Ascending aorta (tissue), 2 donors: ENCODE measurements at regions of chr19 and their contacts with region 1.

Region 1: GRCh38 chr19:45506246-45506990 is 861 bp upstream of the VASP start:
- DNase-seq: peak; percentile 73 to 94
- H3K4me3 ChIP-seq: peak overlapping the region; percentile 97 to 99
- H3K27ac ChIP-seq: peak overlapping the region; percentile 90 to 96
- H3K4me1 ChIP-seq: peaks cover 2 to 9% of the 10 kb centered on the region in 2 donors
- H3K27me3 ChIP-seq: no peaks in the 10 kb centered on the region
- CTCF ChIP-seq: peak in 2 of 3 experiments; percentile 29 to 46

Region 2: DNA sequence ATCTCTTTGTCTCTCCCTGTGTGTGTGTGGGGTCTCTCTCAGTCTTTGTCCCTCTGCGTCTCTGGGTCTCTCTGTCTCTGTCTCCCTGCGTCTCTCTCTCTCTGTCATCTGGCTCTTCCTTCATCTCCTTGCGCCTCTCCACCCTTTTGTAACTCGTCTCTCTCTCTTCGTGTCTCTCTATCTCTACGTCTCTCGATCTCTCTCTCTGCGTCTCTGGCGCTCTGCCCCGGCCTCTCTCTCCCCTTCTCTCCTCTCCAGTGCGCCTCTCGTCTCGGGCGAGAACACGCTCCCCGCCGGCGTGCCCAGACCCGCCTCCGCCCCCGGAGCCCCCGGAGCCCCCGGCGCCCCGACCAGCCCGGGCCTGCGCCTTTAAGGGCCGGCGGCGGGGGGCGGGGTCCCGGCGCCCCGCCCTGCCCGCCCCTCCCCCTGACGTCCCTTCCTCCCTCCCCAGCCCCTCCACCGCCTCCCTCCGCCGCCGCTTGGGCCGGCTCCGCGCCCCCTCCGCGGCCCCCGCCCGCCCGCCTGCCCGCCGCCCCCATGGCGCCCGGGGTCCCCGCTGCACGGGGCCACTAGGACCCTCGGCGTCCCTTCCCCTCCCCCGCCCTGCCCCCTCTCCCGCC is 255.5 kb before region 1 on chr19 and contains the start of gene MARK4:
- intact Hi-C with region 1: loop called (anchors 10 kb)
- DNase-seq: peak in 1 of 2 donors; percentile 68
- H3K4me3 ChIP-seq: peak within 1 kb of the TSS; percentile 83 to 99
- H3K27ac ChIP-seq: peak within 1 kb of the TSS; percentile 58 to 65
- H3K4me1 ChIP-seq: peaks cover 2 to 26% of the 10 kb centered on the region in 2 donors
- H3K27me3 ChIP-seq: no peaks in the 10 kb centered on the region
- CTCF ChIP-seq: no peak
- total RNA-seq, gene MARK4: 22.8 TPM

Region 3: DNA sequence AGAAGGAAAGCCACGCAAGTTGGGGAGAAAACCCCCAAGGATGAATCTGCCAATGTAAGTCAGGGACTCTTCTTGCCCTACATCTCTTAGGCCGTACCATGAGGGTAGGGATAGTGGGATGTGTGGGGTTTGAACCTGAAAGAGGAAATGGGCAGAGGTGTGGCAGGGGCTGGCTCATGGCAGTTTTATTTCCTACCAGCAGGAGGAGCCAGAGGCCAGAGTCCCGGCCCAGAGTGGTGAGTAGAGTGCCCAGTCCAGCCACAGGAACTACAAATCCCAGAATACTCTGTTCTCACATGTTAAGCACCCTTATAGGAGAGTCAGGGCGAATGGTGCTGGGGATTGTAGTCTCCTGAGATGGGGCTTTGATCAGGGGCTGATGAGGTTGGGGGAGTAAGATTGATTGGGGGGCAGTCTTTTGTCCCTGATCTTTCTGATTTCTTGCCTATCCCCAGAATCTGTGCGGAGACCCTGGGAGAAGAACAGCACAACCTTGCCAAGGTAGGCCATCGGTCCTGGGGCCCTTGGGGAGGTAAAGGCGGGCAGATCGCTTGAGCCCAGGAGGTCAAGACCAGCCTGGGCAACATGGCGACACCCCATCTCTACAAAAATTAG is 17.3 kb after region 1 on chr19:
- intact Hi-C with region 1: loop called (anchors 2 kb)
- DNase-seq: peak; percentile 47 to 89
- H3K4me3 ChIP-seq: no peak overlapping the region
- H3K27ac ChIP-seq: peak overlapping the region; percentile 38 to 46
- H3K4me1 ChIP-seq: peaks cover 0 to 6% of the 10 kb centered on the region in 2 donors
- H3K27me3 ChIP-seq: no peaks in the 10 kb centered on the region
- CTCF ChIP-seq: peak; percentile 86 to 92 (median 90)

Region 4: DNA sequence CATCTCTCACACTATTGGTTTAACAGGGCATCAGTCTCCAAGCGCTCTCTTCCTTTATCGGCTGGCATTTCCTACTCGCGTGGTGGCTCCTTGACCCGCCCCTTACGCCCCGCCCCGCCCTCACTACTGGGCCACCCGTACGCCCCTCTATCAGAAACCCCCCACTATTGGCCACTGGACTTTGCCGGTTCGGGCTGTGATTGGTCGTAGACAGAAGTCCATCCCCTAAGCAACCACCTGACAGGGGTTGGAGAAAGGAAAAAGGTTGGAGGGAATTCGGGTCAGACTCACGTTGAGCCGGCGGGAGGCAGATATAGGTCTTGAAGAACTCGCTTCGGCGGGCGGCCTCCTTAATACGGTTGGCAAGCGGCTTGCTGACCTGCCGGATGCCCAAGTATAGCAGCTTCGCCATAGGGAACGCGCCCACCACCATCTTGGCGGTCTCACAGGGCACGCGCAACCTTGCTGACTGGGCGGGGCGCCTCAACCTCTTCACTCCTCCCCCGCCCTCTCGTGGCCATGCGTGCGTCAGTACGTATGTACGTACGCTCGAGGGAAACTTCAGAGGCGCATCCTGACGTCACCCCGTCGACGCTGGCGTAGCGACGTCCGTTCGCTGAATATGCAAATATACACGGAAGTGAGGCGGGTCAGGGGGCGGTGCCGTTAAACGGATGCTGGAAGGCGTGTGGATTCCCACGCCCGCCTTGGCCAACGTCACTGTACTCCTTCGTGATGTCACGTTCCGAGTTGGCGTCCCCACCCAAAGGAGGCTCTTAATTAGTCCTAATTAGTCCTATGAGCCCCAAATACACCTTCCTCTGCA is 78.1 kb after region 1 on chr19 and contains the start of gene OPA3:
- intact Hi-C with region 1: loop called (anchors 5 kb)
- DNase-seq: peak; percentile 99 to 100
- H3K4me3 ChIP-seq: peak within 1 kb of the TSS; percentile 67
- H3K27ac ChIP-seq: peak within 1 kb of the TSS; percentile 95 to 97
- H3K4me1 ChIP-seq: peaks cover 0 to 10% of the 10 kb centered on the region in 2 donors
- H3K27me3 ChIP-seq: no peaks in the 10 kb centered on the region
- CTCF ChIP-seq: no peak
- total RNA-seq, gene OPA3: 4.5 TPM

Region 5: DNA sequence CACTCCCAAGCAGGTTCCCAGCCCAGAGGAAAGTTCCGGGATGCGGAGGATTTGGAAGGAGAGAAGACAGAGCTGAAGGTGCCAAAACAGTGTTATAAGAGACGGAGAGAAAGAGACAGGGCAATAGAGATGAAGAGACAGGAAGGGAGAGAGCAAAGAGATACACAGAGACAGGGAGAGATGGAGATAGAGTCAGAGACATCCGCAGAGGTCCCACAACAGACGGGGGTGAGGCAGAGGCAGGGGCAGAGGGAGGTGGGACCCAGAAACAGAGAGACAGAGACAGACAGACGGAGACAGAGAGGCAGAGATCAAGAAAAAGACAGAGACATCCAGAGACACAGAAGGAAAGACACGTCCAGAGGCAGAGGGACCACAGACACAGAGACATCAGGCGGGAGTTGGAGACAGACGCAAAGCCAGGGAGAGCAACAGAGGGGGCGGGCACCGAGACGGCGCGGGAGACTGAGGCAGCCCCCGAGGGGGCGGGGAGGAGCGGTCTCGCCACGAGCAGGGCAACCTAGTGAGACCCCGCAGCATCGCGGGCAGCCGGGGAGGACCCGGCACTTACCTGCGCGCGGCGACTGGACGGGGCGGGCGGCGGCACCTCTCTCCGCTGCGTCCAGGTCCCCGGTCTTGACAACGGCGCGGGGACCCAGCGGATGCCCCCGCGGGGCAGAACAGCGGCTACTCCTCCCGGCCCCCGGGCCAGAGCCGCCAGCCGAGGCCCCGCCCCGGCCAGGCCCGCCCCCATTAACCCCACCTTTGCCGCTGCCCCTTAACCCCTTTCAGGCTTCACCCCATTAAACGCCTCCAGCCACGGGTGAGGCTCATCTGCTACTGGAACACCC is 95.3 kb after region 1 on chr19 and contains the start of gene GPR4:
- intact Hi-C with region 1: no loop called
- DNase-seq: no peak
- H3K4me3 ChIP-seq: peak within 1 kb of the TSS; percentile 37 to 46
- H3K27ac ChIP-seq: peak within 1 kb of the TSS in 1 of 2 donors; percentile 20
- H3K4me1 ChIP-seq: peaks cover 0 to 7% of the 10 kb centered on the region in 2 donors
- H3K27me3 ChIP-seq: peaks cover 28% of the 10 kb centered on the region
- CTCF ChIP-seq: no peak
- total RNA-seq, gene GPR4: 14.0 TPM

Region 6: DNA sequence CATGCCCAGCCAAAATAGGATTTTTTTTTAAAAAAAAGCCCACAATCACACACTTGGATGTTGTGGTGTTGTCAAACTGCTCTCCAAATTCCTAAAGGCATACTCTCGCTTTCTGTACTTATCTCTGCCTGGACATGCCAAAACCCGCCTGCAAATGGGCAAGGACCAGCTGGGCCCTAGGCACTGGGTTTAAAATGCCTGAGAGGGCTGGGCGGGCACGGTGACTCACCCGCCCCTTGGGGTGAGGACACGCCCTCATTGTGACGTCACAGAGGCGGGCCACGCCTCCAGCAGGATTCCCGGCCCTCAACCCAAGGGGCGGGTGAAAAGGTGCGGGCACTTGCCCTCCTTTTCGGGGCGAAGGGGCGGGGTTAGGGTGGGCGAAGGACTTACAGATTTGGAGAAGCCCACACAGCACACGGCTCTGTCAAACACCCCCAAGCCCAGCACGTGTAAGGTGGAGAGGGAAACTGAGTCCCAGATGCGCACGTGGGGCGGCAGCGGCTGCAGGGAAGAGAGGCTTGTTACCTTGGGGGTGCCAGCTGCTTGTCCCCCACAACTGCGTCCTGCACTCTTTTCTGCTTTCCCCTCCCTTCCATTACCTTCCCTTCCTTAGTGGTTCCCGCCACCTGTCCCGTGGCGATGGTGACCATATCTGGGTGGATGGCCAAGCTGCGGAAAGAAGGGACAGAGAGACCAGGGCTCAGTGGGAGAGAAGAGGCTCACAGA is 126.2 kb after region 1 on chr19:
- intact Hi-C with region 1: loop called (anchors 5 kb)
- DNase-seq: peak in 1 of 2 donors; percentile 88
- H3K4me3 ChIP-seq: no peak overlapping the region
- H3K27ac ChIP-seq: peak overlapping the region; percentile 49 to 82
- H3K4me1 ChIP-seq: peaks cover 0 to 11% of the 10 kb centered on the region in 2 donors
- H3K27me3 ChIP-seq: no peaks in the 10 kb centered on the region
- CTCF ChIP-seq: no peak